ENCODE measurements at regions of chr3 and their contacts with region 1.

Region 1: GRCh38 chr3:42101048-42101447 is 9.9 kb downstream of the TRAK1 start:
- DNase-seq: no peak
- ATAC-seq: no peak
- H3K4me3 Mint-ChIP-seq: no peak overlapping the region
- H3K27ac Mint-ChIP-seq: no peak overlapping the region
- H3K4me1 Mint-ChIP-seq: peaks cover 14% of the 10 kb centered on the region
- H3K27me3 Mint-ChIP-seq: no peaks in the 10 kb centered on the region

Region 2: GRCh38 chr3:40580494-40581091 is 1520.5 kb before region 1 on chr3:
- CTCF ChIA-PET with region 1: interaction called, 3 read pairs
- POLR2A ChIA-PET with region 1: no interaction called
- intact Hi-C with region 1: loop called in 1 of 2 experiments (anchors 5 kb)
- DNase-seq: peak; percentile 79
- ATAC-seq: peak; percentile 88
- H3K4me3 Mint-ChIP-seq: no peak overlapping the region
- H3K27ac Mint-ChIP-seq: no peak overlapping the region
- H3K4me1 Mint-ChIP-seq: peaks cover 2% of the 10 kb centered on the region
- H3K27me3 Mint-ChIP-seq: peaks cover 8% of the 10 kb centered on the region

Region 3: DNA sequence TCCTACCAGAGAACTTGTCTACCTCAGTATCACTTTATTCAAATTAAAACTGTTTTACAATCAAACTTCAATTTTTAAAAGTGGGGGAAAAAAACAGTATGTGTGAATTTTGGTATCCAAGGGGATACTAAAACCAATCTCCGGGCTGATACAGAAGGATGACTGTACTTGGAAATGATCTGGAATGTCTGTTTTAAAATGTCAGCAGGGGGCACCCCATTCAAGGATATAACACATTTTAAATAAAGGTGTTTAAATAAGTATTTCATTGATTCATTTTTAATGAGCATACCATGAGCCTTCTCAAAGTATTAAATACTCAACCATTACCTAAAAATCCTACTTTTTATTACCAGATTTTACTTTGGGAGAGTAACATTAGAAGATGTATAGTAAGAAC is 207.1 kb before region 1 on chr3:
- CTCF ChIA-PET with region 1: interaction called, 18 read pairs
- POLR2A ChIA-PET with region 1: no interaction called
- intact Hi-C with region 1: loop called (anchors 1 to 5 kb)
- DNase-seq: no peak
- ATAC-seq: no peak
- H3K4me3 Mint-ChIP-seq: no peak overlapping the region
- H3K27ac Mint-ChIP-seq: no peak overlapping the region
- H3K4me1 Mint-ChIP-seq: no peaks in the 10 kb centered on the region
- H3K27me3 Mint-ChIP-seq: no peaks in the 10 kb centered on the region

Region 4: GRCh38 chr3:42012935-42013690 is 87.9 kb before region 1 on chr3:
- CTCF ChIA-PET with region 1: interaction called, 10 read pairs
- POLR2A ChIA-PET with region 1: no interaction called
- intact Hi-C with region 1: loop called (anchors 1 to 5 kb)
- DNase-seq: peak; percentile 88
- ATAC-seq: peak; percentile 75
- H3K4me3 Mint-ChIP-seq: peak overlapping the region; percentile 90
- H3K27ac Mint-ChIP-seq: peak overlapping the region; percentile 92
- H3K4me1 Mint-ChIP-seq: peaks cover 46% of the 10 kb centered on the region
- H3K27me3 Mint-ChIP-seq: no peaks in the 10 kb centered on the region

Region 5: GRCh38 chr3:42045719-42046243 is 55.3 kb before region 1 on chr3:
- CTCF ChIA-PET with region 1: interaction called, 11 read pairs
- POLR2A ChIA-PET with region 1: no interaction called
- intact Hi-C with region 1: no loop called
- DNase-seq: no peak
- ATAC-seq: no peak
- H3K4me3 Mint-ChIP-seq: no peak overlapping the region
- H3K27ac Mint-ChIP-seq: no peak overlapping the region
- H3K4me1 Mint-ChIP-seq: peaks cover 29% of the 10 kb centered on the region
- H3K27me3 Mint-ChIP-seq: no peaks in the 10 kb centered on the region

Region 6: DNA sequence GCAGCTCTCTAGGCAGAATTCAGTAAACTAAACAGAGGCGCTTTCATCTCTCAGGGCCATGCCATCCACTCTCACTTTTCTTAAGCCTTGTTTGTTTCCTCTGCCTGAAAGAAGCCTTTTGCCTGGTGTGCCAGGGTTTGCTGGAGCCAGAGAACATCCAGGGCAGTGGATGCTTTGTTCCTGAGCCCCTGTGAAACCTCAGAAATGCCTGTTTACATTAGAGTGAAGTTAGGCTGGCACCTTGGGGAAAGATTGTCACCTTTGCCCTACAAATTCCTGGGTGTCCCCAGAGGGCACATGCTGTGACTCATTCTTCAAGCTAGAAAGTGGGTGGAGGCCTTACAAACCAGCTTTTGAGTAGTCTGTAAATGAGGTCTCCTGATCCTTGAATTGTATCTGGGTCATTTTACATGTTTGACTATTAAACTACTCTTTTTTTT is 20.6 kb before region 1 on chr3:
- CTCF ChIA-PET with region 1: interaction called, 10 read pairs
- POLR2A ChIA-PET with region 1: no interaction called
- intact Hi-C with region 1: no loop called
- DNase-seq: peak; percentile 47
- ATAC-seq: peak; percentile 86
- H3K4me3 Mint-ChIP-seq: peak overlapping the region; percentile 7
- H3K27ac Mint-ChIP-seq: peak overlapping the region; percentile 75
- H3K4me1 Mint-ChIP-seq: peaks cover 57% of the 10 kb centered on the region
- H3K27me3 Mint-ChIP-seq: no peaks in the 10 kb centered on the region

Region 7: GRCh38 chr3:42190701-42191462 is 89.8 kb after region 1 on chr3:
- CTCF ChIA-PET with region 1: interaction called, 13 read pairs
- POLR2A ChIA-PET with region 1: no interaction called
- intact Hi-C with region 1: no loop called
- DNase-seq: peak; percentile 80
- ATAC-seq: peak; percentile 90
- H3K4me3 Mint-ChIP-seq: no peak overlapping the region
- H3K27ac Mint-ChIP-seq: no peak overlapping the region
- H3K4me1 Mint-ChIP-seq: peaks cover 11% of the 10 kb centered on the region
- H3K27me3 Mint-ChIP-seq: no peaks in the 10 kb centered on the region

Measured in activated CD4-positive, alpha-beta T cell treated with anti-CD3 and anti-CD28 coated beads for 36 hours (primary cell).